ENCODE measurements at regions of chr7 and their contacts with region 1.

Region 1: GRCh38 chr7:27921081-27921836 is 181.3 kb downstream of the TAX1BP1 start:
- DNase-seq: no peak

Region 2: GRCh38 chr7:27419581-27420177 is 501.6 kb before region 1 on chr7:
- intact Hi-C with region 1: no loop called
- DNase-seq: no peak

Region 3: GRCh38 chr7:27739909-27740448 is 181.3 kb before region 1 on chr7 and contains the start of gene TAX1BP1:
- intact Hi-C with region 1: loop called (anchors 10 kb)
- DNase-seq: peak; percentile 94 to 99 (median 96)

Region 4: GRCh38 chr7:27883696-27884095 is 37.6 kb before region 1 on chr7:
- intact Hi-C with region 1: no loop called
- DNase-seq: no peak